Naive thymus-derived CD4-positive, alpha-beta T cell (primary cell): ENCODE measurements at regions of chr3 and their contacts with region 1.

Region 1: DNA sequence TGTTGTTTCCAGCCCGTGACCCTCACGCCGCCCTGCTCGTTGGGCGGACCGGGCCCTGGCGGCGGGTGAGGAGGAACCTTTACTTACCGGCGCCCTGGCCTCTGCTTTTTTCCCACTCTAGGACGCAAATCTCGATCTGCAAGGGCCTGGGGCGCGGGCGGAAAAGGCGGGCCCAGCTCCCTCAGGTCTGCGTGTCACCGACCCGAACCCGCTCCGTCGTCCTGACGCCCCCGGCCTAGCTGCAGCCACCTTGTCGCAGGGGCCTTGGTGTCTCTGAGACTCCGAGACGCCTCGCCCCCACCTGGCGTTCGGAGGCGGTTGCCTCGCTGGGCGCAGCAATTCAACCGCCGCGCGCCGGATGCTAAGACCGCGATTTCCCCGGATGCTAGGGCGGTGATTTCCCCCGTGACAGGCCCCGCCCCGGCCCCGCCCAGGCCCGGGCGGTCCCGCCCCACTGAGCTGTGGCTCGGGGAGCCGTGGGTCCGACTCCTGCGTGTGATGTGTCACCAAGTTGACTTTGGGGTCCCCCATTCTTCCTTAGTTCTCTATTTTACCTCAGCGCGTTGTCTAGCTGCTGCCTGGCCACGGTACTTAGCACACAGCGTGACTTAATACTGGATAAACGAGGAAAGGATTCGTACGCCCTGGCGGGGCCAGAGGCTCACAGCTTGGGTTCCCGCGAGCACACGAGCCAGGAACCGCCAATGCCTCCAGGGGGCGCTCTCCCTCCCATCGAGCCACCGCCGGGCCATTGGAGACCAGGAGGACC is at the start of gene RPL39L:
- DNase-seq: peak; percentile 87 to 95 (median 92)
- ATAC-seq: peak; percentile 97
- H3K4me3 ChIP-seq: peak within 1 kb of the TSS; percentile 94
- H3K4me3 Mint-ChIP-seq: peak within 1 kb of the TSS; percentile 80 to 94 (median 89)
- H3K27ac ChIP-seq: peak within 1 kb of the TSS; percentile 76
- H3K27ac Mint-ChIP-seq: peak within 1 kb of the TSS; percentile 86 to 98 (median 94)
- H3K4me1 ChIP-seq: peaks cover 9 to 17% of the 10 kb centered on the region in 2 donors
- H3K4me1 Mint-ChIP-seq: peaks cover 6 to 26% (median 17%) of the 10 kb centered on the region in 7 donors
- H3K27me3 ChIP-seq: no peaks in the 10 kb centered on the region
- H3K27me3 Mint-ChIP-seq: peaks cover 0 to 2% (median 0%) of the 10 kb centered on the region in 5 donors
- total RNA-seq, gene RPL39L: 0.81 to 14.0 (median 2.8) TPM in 4 of 5 experiments, not detected in the other

Region 2: GRCh38 chr3:186821429-186822367 is 317.6 kb before region 1 on chr3:
- CTCF ChIA-PET with region 1: no interaction called
- POLR2A ChIA-PET with region 1: no interaction called
- intact Hi-C with region 1: no loop called
- DNase-seq: peak in 5 of 9 donors; percentile 37 to 49 (median 45)
- ATAC-seq: peak; percentile 46
- H3K4me3 ChIP-seq: no peak overlapping the region
- H3K4me3 Mint-ChIP-seq: no peak overlapping the region
- H3K27ac ChIP-seq: no peak overlapping the region
- H3K27ac Mint-ChIP-seq: no peak overlapping the region
- H3K4me1 ChIP-seq: peaks cover 6 to 11% of the 10 kb centered on the region in 2 donors
- H3K4me1 Mint-ChIP-seq: peaks cover 9 to 20% (median 12%) of the 10 kb centered on the region in 7 donors
- H3K27me3 ChIP-seq: peaks cover 0 to 14% of the 10 kb centered on the region in 2 donors
- H3K27me3 Mint-ChIP-seq: peaks cover 13 to 23% (median 18%) of the 10 kb centered on the region in 5 donors

Region 3: DNA sequence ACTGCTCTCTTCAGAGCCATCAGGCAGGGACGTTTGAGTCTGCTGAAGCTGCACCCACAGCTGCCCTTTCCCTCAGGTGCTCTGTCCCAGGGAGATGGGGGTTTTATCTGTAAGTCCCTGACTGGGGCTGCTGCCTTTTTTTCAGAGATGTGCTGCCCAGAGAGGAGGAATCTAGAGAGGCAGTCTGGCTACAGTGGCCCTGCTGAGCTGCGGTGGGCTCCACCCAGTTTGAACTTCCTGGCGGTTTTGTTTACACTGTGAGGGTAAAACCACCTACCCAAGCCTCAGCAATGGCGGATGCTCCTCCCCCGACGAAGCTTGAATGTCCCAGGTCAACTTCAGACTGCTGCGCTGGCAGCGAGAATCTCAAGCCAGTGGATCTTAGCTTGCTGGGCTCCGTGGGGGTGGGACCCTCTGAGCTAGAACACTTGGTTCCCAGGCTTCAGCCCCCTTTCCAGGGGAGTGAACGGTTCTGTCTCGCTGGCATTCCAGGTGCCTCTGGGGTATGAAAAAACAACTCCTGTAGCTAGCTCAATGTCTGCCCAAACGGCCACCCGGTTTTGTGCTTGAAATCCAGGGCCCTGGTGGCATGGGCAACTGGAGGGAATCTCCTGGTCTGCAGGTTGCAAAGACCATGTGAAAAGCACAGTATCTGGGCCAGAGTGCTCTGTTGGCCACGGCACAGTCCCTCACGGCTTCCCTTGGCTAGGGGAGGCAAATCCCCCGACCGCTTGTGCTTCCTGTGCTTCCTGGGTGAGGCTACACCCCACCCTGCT is 230.0 kb before region 1 on chr3:
- CTCF ChIA-PET with region 1: no interaction called
- POLR2A ChIA-PET with region 1: interaction called, 3 read pairs
- intact Hi-C with region 1: loop called in 1 of 2 experiments (anchors 1 kb)
- DNase-seq: peak; percentile 40 to 86 (median 78)
- ATAC-seq: peak; percentile 86
- H3K4me3 ChIP-seq: peak overlapping the region; percentile 48
- H3K4me3 Mint-ChIP-seq: peak overlapping the region; percentile 61 to 78 (median 72)
- H3K27ac ChIP-seq: peak overlapping the region; percentile 66
- H3K27ac Mint-ChIP-seq: peak overlapping the region; percentile 88 to 94 (median 91)
- H3K4me1 ChIP-seq: peaks cover 17 to 18% of the 10 kb centered on the region in 2 donors
- H3K4me1 Mint-ChIP-seq: peaks cover 17 to 48% (median 37%) of the 10 kb centered on the region in 7 donors
- H3K27me3 ChIP-seq: no peaks in the 10 kb centered on the region
- H3K27me3 Mint-ChIP-seq: no peaks in the 10 kb centered on the region

Region 4: GRCh38 chr3:187112934-187113793 is 26.1 kb before region 1 on chr3:
- CTCF ChIA-PET with region 1: interaction called, 29 read pairs
- POLR2A ChIA-PET with region 1: interaction called, 7 read pairs
- intact Hi-C with region 1: loop called (anchors 1 kb)
- DNase-seq: peak in 6 of 9 donors; percentile 16 to 59 (median 48)
- ATAC-seq: peak; percentile 70
- H3K4me3 ChIP-seq: no peak overlapping the region
- H3K4me3 Mint-ChIP-seq: peak overlapping the region in 1 of 10 donors; percentile 13
- H3K27ac ChIP-seq: no peak overlapping the region
- H3K27ac Mint-ChIP-seq: no peak overlapping the region
- H3K4me1 ChIP-seq: no peaks in the 10 kb centered on the region
- H3K4me1 Mint-ChIP-seq: peaks cover 0 to 9% (median 6%) of the 10 kb centered on the region in 7 donors
- H3K27me3 ChIP-seq: no peaks in the 10 kb centered on the region
- H3K27me3 Mint-ChIP-seq: no peaks in the 10 kb centered on the region

Region 5: GRCh38 chr3:187150599-187150998 is 11.3 kb after region 1 on chr3:
- CTCF ChIA-PET with region 1: interaction called, 28 read pairs
- POLR2A ChIA-PET with region 1: no interaction called
- intact Hi-C with region 1: loop called in 1 of 2 experiments (anchors 1 kb)
- DNase-seq: peak; percentile 30 to 57 (median 43)
- ATAC-seq: peak; percentile 60
- H3K4me3 ChIP-seq: no peak overlapping the region
- H3K4me3 Mint-ChIP-seq: no peak overlapping the region
- H3K27ac ChIP-seq: no peak overlapping the region
- H3K27ac Mint-ChIP-seq: peak overlapping the region in 1 of 9 donors; percentile 38
- H3K4me1 ChIP-seq: no peaks in the 10 kb centered on the region
- H3K4me1 Mint-ChIP-seq: peaks cover 0 to 32% (median 10%) of the 10 kb centered on the region in 7 donors
- H3K27me3 ChIP-seq: no peaks in the 10 kb centered on the region
- H3K27me3 Mint-ChIP-seq: peaks cover 0 to 48% (median 0%) of the 10 kb centered on the region in 5 donors

Region 6: GRCh38 chr3:187368251-187369088 is 229.2 kb after region 1 on chr3 and contains the start of gene RTP4:
- CTCF ChIA-PET with region 1: no interaction called
- POLR2A ChIA-PET with region 1: interaction called, 3 read pairs
- intact Hi-C with region 1: loop called in 1 of 2 experiments (anchors 1 kb)
- DNase-seq: peak in 8 of 9 donors; percentile 25 to 70 (median 55)
- ATAC-seq: peak; percentile 86
- H3K4me3 ChIP-seq: peak within 1 kb of the TSS; percentile 85
- H3K4me3 Mint-ChIP-seq: peak within 1 kb of the TSS; percentile 89 to 100 (median 98)
- H3K27ac ChIP-seq: peak within 1 kb of the TSS; percentile 78
- H3K27ac Mint-ChIP-seq: peak within 1 kb of the TSS; percentile 94 to 100 (median 98)
- H3K4me1 ChIP-seq: peaks cover 9 to 13% of the 10 kb centered on the region in 2 donors
- H3K4me1 Mint-ChIP-seq: peaks cover 22 to 42% (median 29%) of the 10 kb centered on the region in 7 donors
- H3K27me3 ChIP-seq: no peaks in the 10 kb centered on the region
- H3K27me3 Mint-ChIP-seq: no peaks in the 10 kb centered on the region
- total RNA-seq, gene RTP4: 1.6 to 23.1 (median 5.5) TPM